ENCODE measurements at regions of chr3 and their contacts with region 1.

Region 1: DNA sequence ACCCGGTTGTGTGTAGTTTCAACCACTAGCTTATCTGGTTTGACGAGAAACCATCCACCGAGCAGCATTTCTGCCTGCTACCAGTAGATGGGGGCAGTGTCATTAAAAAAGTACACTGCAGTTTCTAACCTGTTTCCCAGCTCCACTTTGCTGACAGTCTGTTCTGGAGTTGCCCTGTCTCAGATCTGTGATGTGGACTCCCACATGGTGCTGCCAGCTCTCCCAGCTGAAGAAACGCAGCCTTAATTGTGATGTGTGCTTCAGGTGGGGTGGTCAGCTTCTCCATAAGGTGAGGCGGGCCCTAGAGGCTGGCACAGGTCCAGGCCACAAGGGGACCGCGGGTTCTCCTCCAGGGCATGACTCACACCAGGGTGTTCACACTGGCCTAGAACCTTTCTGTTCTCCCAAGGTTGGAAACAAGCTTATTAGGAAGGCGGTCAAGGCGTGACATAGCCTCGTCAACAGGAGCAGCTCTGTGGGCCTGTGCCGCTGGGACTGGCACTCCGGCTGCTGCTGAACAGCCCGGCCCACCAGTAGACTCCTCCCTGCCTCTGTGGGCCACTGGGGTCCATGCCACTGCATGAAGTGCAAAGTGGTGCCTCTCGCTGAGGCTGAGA is 2.9 kb upstream of the FAM43A start:
- DNase-seq: peak; percentile 43
- ATAC-seq: peak; percentile 62
- H3K4me3 Mint-ChIP-seq: no peak overlapping the region
- H3K27ac Mint-ChIP-seq: peak overlapping the region; percentile 50
- H3K4me1 Mint-ChIP-seq: peaks cover 38% of the 10 kb centered on the region
- H3K27me3 Mint-ChIP-seq: no peaks in the 10 kb centered on the region
- CTCF ChIP-seq: peak; percentile 55

Region 2: DNA sequence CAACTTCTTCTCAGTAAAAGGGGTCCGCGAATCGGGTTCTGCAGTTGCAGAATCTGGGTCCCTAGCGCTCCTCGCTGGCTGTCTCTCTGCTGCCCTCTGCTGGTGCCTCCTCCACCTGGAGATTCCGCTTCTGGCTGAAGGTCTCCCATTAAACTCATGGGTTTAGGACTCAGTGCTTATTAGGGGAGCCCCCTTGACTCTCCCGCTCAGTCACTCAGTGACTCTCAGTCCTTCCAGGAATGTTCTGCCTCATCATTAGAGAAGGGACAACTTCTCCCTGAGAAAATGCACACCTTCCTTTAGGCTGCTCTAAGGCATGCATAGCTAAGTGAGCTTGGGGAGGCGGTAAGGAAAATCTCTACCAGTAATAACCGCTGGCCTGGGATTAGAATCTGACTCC is 338.8 kb before region 1 on chr3:
- CTCF ChIA-PET with region 1: no interaction called
- POLR2A ChIA-PET with region 1: no interaction called
- intact Hi-C with region 1: no loop called
- DNase-seq: peak; percentile 58
- ATAC-seq: peak; percentile 66
- H3K4me3 Mint-ChIP-seq: no peak overlapping the region
- H3K27ac Mint-ChIP-seq: no peak overlapping the region
- H3K4me1 Mint-ChIP-seq: no peaks in the 10 kb centered on the region
- H3K27me3 Mint-ChIP-seq: peaks cover 8% of the 10 kb centered on the region
- CTCF ChIP-seq: no peak

Region 3: DNA sequence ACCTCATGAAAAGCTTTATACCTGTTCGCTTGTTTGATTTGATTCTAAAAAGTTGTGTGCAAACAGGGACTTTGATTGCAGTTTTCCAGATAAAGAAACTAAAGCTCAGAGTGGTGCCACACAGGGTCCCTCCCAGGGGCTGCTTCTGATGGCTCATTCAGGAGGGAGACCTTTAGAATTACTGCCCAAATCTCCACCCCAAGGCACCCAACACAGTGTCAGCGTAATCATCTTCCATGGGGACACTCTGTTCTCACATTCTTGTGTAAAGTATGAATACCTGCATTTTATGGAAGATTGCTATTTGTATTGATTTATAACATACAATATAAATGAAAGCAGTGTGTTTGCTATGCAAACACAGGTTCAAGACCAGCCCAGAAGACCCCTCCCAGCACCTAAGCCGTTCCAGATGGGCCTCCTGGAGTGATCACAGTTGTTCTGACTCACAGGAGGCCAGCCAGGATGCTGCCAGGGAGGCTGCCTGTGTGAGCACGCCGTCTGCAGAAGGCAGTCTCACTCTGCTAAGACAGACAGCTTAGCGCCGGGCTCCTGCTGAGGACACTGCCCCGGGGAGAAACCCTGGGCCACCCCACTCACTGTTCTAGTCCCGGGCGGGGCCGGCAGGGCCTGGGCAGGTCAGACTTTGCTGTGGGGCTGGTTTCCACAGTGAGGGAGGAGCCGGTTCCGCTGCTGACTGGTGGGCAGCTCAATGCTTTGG is 188.5 kb after region 1 on chr3:
- CTCF ChIA-PET with region 1: interaction called, 3 read pairs
- POLR2A ChIA-PET with region 1: interaction called, 10 read pairs
- intact Hi-C with region 1: loop called (anchors 2 kb)
- DNase-seq: peak; percentile 33
- ATAC-seq: peak; percentile 91
- H3K4me3 Mint-ChIP-seq: peak overlapping the region; percentile 62
- H3K27ac Mint-ChIP-seq: peak overlapping the region; percentile 65
- H3K4me1 Mint-ChIP-seq: peaks cover 19% of the 10 kb centered on the region
- H3K27me3 Mint-ChIP-seq: peaks cover 4% of the 10 kb centered on the region
- CTCF ChIP-seq: no peak

Region 4: DNA sequence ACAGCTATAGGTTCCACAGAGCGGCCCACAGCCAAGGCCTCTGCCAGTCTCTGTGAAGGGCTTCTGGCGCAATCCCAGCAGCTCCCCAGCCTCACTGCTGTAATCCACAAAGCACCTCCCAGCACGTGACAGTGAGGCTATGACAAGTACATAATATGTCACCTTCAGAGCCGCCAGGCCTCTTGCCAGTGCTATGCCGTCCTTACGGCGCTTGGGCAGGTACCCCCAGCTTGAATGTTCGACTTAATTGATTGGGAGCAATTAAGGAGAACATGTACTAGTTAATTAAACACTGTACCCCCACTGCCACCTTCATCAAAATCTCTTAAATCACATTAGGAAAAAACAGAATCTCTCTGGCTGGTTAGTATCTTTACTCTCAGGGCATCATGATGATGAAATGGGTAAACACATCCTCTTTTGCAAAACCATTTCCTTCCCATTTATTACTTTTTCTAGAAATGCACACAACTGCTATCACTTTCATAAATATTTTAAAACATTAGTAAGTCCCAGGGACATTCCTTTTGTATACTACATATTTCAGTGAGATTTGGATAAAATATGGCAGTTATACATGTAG is 418.3 kb after region 1 on chr3:
- CTCF ChIA-PET with region 1: interaction called, 176 read pairs
- POLR2A ChIA-PET with region 1: interaction called, 30 read pairs
- intact Hi-C with region 1: loop called (anchors 1 kb)
- DNase-seq: no peak
- ATAC-seq: peak; percentile 66
- H3K4me3 Mint-ChIP-seq: peak overlapping the region; percentile 52
- H3K27ac Mint-ChIP-seq: peak overlapping the region; percentile 91
- H3K4me1 Mint-ChIP-seq: peaks cover 77% of the 10 kb centered on the region
- H3K27me3 Mint-ChIP-seq: no peaks in the 10 kb centered on the region
- CTCF ChIP-seq: no peak

Region 5: GRCh38 chr3:195154793-195155535 is 472.2 kb after region 1 on chr3:
- CTCF ChIA-PET with region 1: interaction called, 4 read pairs
- POLR2A ChIA-PET with region 1: interaction called, 9 read pairs
- intact Hi-C with region 1: loop called (anchors 2 kb)
- DNase-seq: no peak
- ATAC-seq: peak; percentile 40
- H3K4me3 Mint-ChIP-seq: peak overlapping the region; percentile 53
- H3K27ac Mint-ChIP-seq: peak overlapping the region; percentile 90
- H3K4me1 Mint-ChIP-seq: peaks cover 90% of the 10 kb centered on the region
- H3K27me3 Mint-ChIP-seq: no peaks in the 10 kb centered on the region
- CTCF ChIP-seq: no peak

Region 6: GRCh38 chr3:195356151-195357086 is 673.6 kb after region 1 on chr3:
- CTCF ChIA-PET with region 1: no interaction called
- POLR2A ChIA-PET with region 1: no interaction called
- intact Hi-C with region 1: no loop called
- DNase-seq: no peak
- ATAC-seq: no peak
- H3K4me3 Mint-ChIP-seq: no peak overlapping the region
- H3K27ac Mint-ChIP-seq: no peak overlapping the region
- H3K4me1 Mint-ChIP-seq: peaks cover 30% of the 10 kb centered on the region
- H3K27me3 Mint-ChIP-seq: no peaks in the 10 kb centered on the region
- CTCF ChIP-seq: no peak

Region 7: DNA sequence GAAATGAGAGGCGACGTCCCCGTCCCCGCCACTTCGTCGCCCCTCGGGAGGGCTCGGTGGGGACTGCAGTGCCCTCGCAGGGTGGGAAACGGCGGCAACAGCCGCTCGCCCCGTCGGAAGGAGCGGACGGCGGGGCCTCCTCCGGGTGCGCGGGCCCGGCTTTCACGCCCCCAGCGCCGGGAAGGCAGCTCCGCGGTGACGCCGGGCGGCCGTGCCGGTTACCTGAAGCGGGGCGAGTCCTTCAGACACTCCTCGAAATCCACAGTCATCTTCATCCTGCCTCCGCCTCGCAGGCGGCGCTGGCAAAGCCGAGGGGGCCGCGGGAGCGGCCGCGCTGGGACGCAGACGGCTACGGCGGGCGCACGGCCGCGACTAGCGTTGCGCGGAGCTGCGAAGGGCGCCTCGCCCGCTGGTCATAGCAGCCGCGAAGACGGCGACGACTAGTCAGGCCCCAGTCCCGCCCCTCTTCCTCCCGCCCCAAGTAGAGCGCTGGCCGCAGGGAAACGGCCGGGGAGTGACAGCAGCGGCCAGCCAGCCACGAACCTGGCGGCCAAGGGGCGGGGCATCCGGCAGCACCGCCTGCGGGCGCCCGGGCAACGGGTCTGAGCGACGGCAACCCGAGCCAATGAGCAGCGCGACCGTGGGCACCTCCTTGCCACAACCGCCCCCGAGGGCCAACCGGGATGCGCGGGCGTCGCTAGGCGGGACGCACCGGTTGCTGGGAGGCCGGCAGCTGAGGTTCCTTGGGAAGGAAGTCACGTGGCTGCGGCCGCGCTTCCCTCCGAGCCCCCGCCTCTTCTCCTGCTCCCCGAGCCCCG is 760.0 kb after region 1 on chr3 and contains the start of gene ACAP2:
- CTCF ChIA-PET with region 1: no interaction called
- POLR2A ChIA-PET with region 1: interaction called, 13 read pairs
- intact Hi-C with region 1: loop called (anchors 5 kb)
- DNase-seq: peak; percentile 100
- ATAC-seq: peak; percentile 89
- H3K4me3 Mint-ChIP-seq: peak within 1 kb of the TSS; percentile 95
- H3K27ac Mint-ChIP-seq: peak within 1 kb of the TSS; percentile 93
- H3K4me1 Mint-ChIP-seq: peaks cover 42% of the 10 kb centered on the region
- H3K27me3 Mint-ChIP-seq: no peaks in the 10 kb centered on the region
- CTCF ChIP-seq: no peak
- total RNA-seq, gene ACAP2: 75.5 and 89.7 TPM in 2 replicates

Region 8: GRCh38 chr3:196632046-196632751 is 1949.4 kb after region 1 on chr3:
- CTCF ChIA-PET with region 1: no interaction called
- POLR2A ChIA-PET with region 1: no interaction called
- intact Hi-C with region 1: loop called (anchors 10 kb)
- DNase-seq: peak; percentile 77
- ATAC-seq: peak; percentile 75
- H3K4me3 Mint-ChIP-seq: peak overlapping the region; percentile 93
- H3K27ac Mint-ChIP-seq: peak overlapping the region; percentile 96
- H3K4me1 Mint-ChIP-seq: peaks cover 66% of the 10 kb centered on the region
- H3K27me3 Mint-ChIP-seq: no peaks in the 10 kb centered on the region
- CTCF ChIP-seq: no peak